ENCODE measurements at regions of chr12 and their contacts with region 1.

Region 1: GRCh38 chr12:3622021-3622821 is 130.7 kb downstream of the CRACR2A start:
- DNase-seq: no peak
- ATAC-seq: no peak
- H3K4me3 ChIP-seq: no peak overlapping the region
- H3K4me3 Mint-ChIP-seq: no peak overlapping the region
- H3K27ac ChIP-seq: no peak overlapping the region
- H3K27ac Mint-ChIP-seq: peak overlapping the region; percentile 9
- H3K4me1 ChIP-seq: no peaks in the 10 kb centered on the region
- H3K4me1 Mint-ChIP-seq: no peaks in the 10 kb centered on the region
- H3K27me3 ChIP-seq: no peaks in the 10 kb centered on the region
- H3K27me3 Mint-ChIP-seq: no peaks in the 10 kb centered on the region
- CTCF ChIP-seq: no peak

Region 2: GRCh38 chr12:2988494-2988893 is 633.7 kb before region 1 on chr12:
- CTCF ChIA-PET with region 1: no interaction called
- POLR2A ChIA-PET with region 1: no interaction called
- intact Hi-C with region 1: loop called in 1 of 2 experiments (anchors 5 kb)
- DNase-seq: no peak
- ATAC-seq: no peak
- H3K4me3 ChIP-seq: no peak overlapping the region
- H3K4me3 Mint-ChIP-seq: no peak overlapping the region
- H3K27ac ChIP-seq: no peak overlapping the region
- H3K27ac Mint-ChIP-seq: no peak overlapping the region
- H3K4me1 ChIP-seq: no peaks in the 10 kb centered on the region
- H3K4me1 Mint-ChIP-seq: no peaks in the 10 kb centered on the region
- H3K27me3 ChIP-seq: no peaks in the 10 kb centered on the region
- H3K27me3 Mint-ChIP-seq: no peaks in the 10 kb centered on the region
- CTCF ChIP-seq: no peak

Region 3: GRCh38 chr12:3483089-3483488 is 139.1 kb before region 1 on chr12:
- CTCF ChIA-PET with region 1: no interaction called
- POLR2A ChIA-PET with region 1: no interaction called
- intact Hi-C with region 1: no loop called
- DNase-seq: no peak
- ATAC-seq: no peak
- H3K4me3 ChIP-seq: no peak overlapping the region
- H3K4me3 Mint-ChIP-seq: no peak overlapping the region
- H3K27ac ChIP-seq: no peak overlapping the region
- H3K27ac Mint-ChIP-seq: no peak overlapping the region
- H3K4me1 ChIP-seq: no peaks in the 10 kb centered on the region
- H3K4me1 Mint-ChIP-seq: no peaks in the 10 kb centered on the region
- H3K27me3 ChIP-seq: no peaks in the 10 kb centered on the region
- H3K27me3 Mint-ChIP-seq: peaks cover 21% of the 10 kb centered on the region
- CTCF ChIP-seq: no peak